Endothelial cell of umbilical vein (primary cell): ENCODE measurements at regions of chr7 and their contacts with region 1.

Region 1: DNA sequence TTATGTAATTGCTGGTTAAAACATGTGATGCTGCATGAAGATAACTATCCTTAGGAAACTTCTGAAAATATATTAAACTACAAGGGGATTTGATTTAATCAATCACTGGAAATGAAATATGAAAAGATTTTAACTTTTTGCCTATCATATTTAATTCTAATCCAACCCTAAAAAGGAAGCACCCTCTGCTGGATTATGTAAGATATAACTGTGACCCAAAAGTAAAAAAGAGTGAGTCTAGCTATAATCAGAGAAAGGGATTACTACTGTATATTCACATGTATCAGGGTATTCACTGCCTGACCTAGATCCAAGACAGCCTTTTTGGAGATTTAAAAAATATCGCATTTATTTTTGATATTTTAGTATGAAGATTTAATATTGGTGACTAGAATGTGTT is 295.5 kb downstream of the MDFIC start:
- DNase-seq: peak; percentile 22
- H3K4me3 ChIP-seq: no peak overlapping the region
- H3K27ac ChIP-seq: no peak overlapping the region
- H3K4me1 ChIP-seq: no peaks in the 10 kb centered on the region
- H3K27me3 ChIP-seq: peaks cover 0 to 3% of the 10 kb centered on the region in 2 experiments
- CTCF ChIP-seq: peak in 1 of 2 donors; percentile 8
- POLR2A ChIP-seq: no peak

Region 2: GRCh38 chr7:114922016-114922651 is 295.2 kb before region 1 on chr7 and contains the start of gene MDFIC:
- CTCF ChIA-PET with region 1: interaction called, 8 read pairs
- POLR2A ChIA-PET with region 1: no interaction called
- dilution Hi-C with region 1: no loop called
- intact Hi-C with region 1: loop called (anchors 5 kb)
- DNase-seq: peak; percentile 47
- H3K4me3 ChIP-seq: peak within 1 kb of the TSS; percentile 60 to 96 (median 73)
- H3K27ac ChIP-seq: peak within 1 kb of the TSS; percentile 58
- H3K4me1 ChIP-seq: peaks cover 3% of the 10 kb centered on the region
- H3K27me3 ChIP-seq: peaks cover 0 to 2% of the 10 kb centered on the region in 2 experiments
- CTCF ChIP-seq: no peak
- POLR2A ChIP-seq: peak; percentile 62
- total RNA-seq, gene MDFIC: 13.7 and 14.2 TPM in 2 replicates

Region 3: DNA sequence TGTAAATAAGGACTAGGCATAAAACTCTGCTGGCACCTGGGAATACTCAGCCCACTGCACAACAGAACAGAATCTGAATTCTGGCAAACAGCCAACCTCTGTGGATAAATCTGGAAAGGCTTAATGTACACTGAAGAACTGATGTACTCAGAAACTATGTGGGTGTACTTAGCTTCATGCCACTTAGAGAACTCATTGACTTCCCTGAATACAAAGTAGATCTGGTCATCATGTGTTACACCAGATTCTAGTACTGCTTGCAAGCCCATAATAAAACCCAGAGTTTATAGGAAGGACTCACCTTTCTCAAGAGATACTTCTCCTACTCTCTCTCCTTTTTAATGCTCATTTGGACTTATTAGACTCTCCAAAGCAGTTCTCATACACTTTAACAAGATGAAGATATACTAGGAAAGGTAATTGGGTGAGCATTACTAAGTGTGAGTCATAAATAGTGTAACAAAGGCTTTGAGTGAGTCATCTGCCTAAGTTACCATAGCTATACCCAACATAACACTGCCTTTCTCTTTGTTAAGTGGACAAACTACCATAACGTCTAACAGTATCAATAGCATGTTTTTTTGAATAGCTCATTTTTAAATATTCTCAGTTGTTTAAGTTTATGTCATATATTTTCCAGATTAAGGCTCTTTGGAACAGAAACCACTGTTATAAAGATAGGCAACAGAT is 13.7 kb after region 1 on chr7:
- CTCF ChIA-PET with region 1: interaction called, 14 read pairs
- POLR2A ChIA-PET with region 1: no interaction called
- dilution Hi-C with region 1: no loop called
- intact Hi-C with region 1: no loop called
- DNase-seq: peak; percentile 93
- H3K4me3 ChIP-seq: no peak overlapping the region
- H3K27ac ChIP-seq: peak overlapping the region; percentile 88
- H3K4me1 ChIP-seq: peaks cover 15% of the 10 kb centered on the region
- H3K27me3 ChIP-seq: no peaks in the 10 kb centered on the region
- CTCF ChIP-seq: no peak
- POLR2A ChIP-seq: no peak

Region 4: GRCh38 chr7:115654384-115655214 is 437.2 kb after region 1 on chr7:
- CTCF ChIA-PET with region 1: no interaction called
- POLR2A ChIA-PET with region 1: no interaction called
- dilution Hi-C with region 1: no loop called
- intact Hi-C with region 1: no loop called
- DNase-seq: no peak
- H3K4me3 ChIP-seq: no peak overlapping the region
- H3K27ac ChIP-seq: no peak overlapping the region
- H3K4me1 ChIP-seq: no peaks in the 10 kb centered on the region
- H3K27me3 ChIP-seq: no peaks in the 10 kb centered on the region
- CTCF ChIP-seq: no peak
- POLR2A ChIP-seq: no peak